CD8-positive, alpha-beta T cell (primary cell): ENCODE measurements at regions of chr4 and their contacts with region 1.

Region 1: DNA sequence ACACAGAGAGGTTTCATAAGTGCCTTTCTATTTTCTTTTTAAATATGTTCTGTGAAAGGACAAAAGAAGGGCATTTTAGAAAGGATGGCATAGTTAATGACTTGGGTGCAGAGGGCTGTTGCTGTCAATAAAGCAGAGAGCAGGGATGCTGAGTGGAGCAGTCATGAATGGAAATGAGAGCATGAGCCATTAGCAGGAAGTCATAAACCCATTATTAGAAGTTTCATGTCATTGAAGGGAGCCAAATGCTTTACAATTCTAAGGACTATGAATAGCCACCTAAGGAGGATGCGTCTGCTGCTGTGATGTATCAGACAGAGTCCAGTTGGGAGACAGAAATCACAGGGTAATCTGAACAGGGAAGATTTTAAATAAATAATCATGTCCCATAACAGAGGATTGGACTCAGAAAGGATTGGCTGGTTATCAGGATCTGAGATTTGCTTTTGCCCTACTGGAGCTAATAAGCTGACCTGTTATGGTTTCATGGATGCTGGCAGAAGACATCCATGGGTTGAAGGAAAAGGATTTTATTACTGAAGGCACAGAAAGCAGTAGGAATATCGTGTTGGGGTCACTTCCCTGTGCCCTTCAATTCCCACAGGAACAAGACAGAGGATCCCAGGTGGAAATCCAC is 47.5 kb upstream of the WDR19 start:
- DNase-seq: no peak
- ATAC-seq: no peak
- H3K4me3 ChIP-seq: no peak overlapping the region
- H3K4me3 Mint-ChIP-seq: no peak overlapping the region
- H3K27ac ChIP-seq: no peak overlapping the region
- H3K27ac Mint-ChIP-seq: no peak overlapping the region
- H3K4me1 ChIP-seq: peaks cover 3% of the 10 kb centered on the region
- H3K4me1 Mint-ChIP-seq: peaks cover 4% of the 10 kb centered on the region
- H3K27me3 ChIP-seq: no peaks in the 10 kb centered on the region
- H3K27me3 Mint-ChIP-seq: no peaks in the 10 kb centered on the region
- CTCF ChIP-seq: no peak

Region 2: GRCh38 chr4:37882665-37883296 is 1252.0 kb before region 1 on chr4:
- CTCF ChIA-PET with region 1: no interaction called
- POLR2A ChIA-PET with region 1: no interaction called
- intact Hi-C with region 1: no loop called
- DNase-seq: no peak
- ATAC-seq: no peak
- H3K4me3 ChIP-seq: no peak overlapping the region
- H3K4me3 Mint-ChIP-seq: no peak overlapping the region
- H3K27ac ChIP-seq: no peak overlapping the region
- H3K27ac Mint-ChIP-seq: no peak overlapping the region
- H3K4me1 ChIP-seq: no peaks in the 10 kb centered on the region
- H3K4me1 Mint-ChIP-seq: no peaks in the 10 kb centered on the region
- H3K27me3 ChIP-seq: no peaks in the 10 kb centered on the region
- H3K27me3 Mint-ChIP-seq: no peaks in the 10 kb centered on the region
- CTCF ChIP-seq: no peak

Region 3: GRCh38 chr4:38842994-38843393 is 291.8 kb before region 1 on chr4:
- CTCF ChIA-PET with region 1: no interaction called
- POLR2A ChIA-PET with region 1: no interaction called
- intact Hi-C with region 1: no loop called
- DNase-seq: no peak
- ATAC-seq: no peak
- H3K4me3 ChIP-seq: no peak overlapping the region
- H3K4me3 Mint-ChIP-seq: no peak overlapping the region
- H3K27ac ChIP-seq: no peak overlapping the region
- H3K27ac Mint-ChIP-seq: no peak overlapping the region
- H3K4me1 ChIP-seq: peaks cover 7% of the 10 kb centered on the region
- H3K4me1 Mint-ChIP-seq: peaks cover 7% of the 10 kb centered on the region
- H3K27me3 ChIP-seq: no peaks in the 10 kb centered on the region
- H3K27me3 Mint-ChIP-seq: no peaks in the 10 kb centered on the region
- CTCF ChIP-seq: no peak

Region 4: GRCh38 chr4:38889143-38889542 is 245.7 kb before region 1 on chr4:
- CTCF ChIA-PET with region 1: interaction called, 14 read pairs
- POLR2A ChIA-PET with region 1: no interaction called
- intact Hi-C with region 1: no loop called
- DNase-seq: peak in 1 of 9 experiments; percentile 10
- ATAC-seq: no peak
- H3K4me3 ChIP-seq: no peak overlapping the region
- H3K4me3 Mint-ChIP-seq: no peak overlapping the region
- H3K27ac ChIP-seq: no peak overlapping the region
- H3K27ac Mint-ChIP-seq: no peak overlapping the region
- H3K4me1 ChIP-seq: no peaks in the 10 kb centered on the region
- H3K4me1 Mint-ChIP-seq: peaks cover 6% of the 10 kb centered on the region
- H3K27me3 ChIP-seq: no peaks in the 10 kb centered on the region
- H3K27me3 Mint-ChIP-seq: no peaks in the 10 kb centered on the region
- CTCF ChIP-seq: no peak

Region 5: GRCh38 chr4:38896940-38897339 is 237.9 kb before region 1 on chr4:
- CTCF ChIA-PET with region 1: interaction called, 180 read pairs
- POLR2A ChIA-PET with region 1: interaction called, 3 read pairs
- intact Hi-C with region 1: loop called (anchors 1 kb)
- DNase-seq: no peak
- ATAC-seq: no peak
- H3K4me3 ChIP-seq: no peak overlapping the region
- H3K4me3 Mint-ChIP-seq: no peak overlapping the region
- H3K27ac ChIP-seq: no peak overlapping the region
- H3K27ac Mint-ChIP-seq: no peak overlapping the region
- H3K4me1 ChIP-seq: no peaks in the 10 kb centered on the region
- H3K4me1 Mint-ChIP-seq: no peaks in the 10 kb centered on the region
- H3K27me3 ChIP-seq: no peaks in the 10 kb centered on the region
- H3K27me3 Mint-ChIP-seq: peaks cover 6% of the 10 kb centered on the region
- CTCF ChIP-seq: no peak

Region 6: DNA sequence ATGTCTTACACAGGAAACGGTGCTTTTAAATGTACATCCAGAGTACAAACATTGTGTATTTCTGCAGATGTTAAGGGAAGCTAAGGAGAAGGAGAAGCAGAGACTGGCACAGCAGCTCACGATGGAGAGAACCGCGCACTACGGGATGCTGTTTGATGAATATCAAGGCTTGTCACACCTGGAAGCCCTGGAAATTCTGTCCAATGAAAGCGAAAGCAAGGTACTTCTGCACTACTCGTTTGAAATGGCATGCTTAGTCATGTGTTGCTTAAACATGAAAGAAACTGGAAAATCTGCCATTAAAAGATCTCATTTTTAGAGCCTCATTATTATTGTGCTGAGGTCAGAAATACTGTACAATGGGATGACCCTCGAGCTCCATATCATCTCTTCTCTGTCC is 219.9 kb before region 1 on chr4:
- CTCF ChIA-PET with region 1: interaction called, 10 read pairs
- POLR2A ChIA-PET with region 1: no interaction called
- intact Hi-C with region 1: no loop called
- DNase-seq: peak in 1 of 9 experiments; percentile 7
- ATAC-seq: no peak
- H3K4me3 ChIP-seq: no peak overlapping the region
- H3K4me3 Mint-ChIP-seq: peak overlapping the region; percentile 49
- H3K27ac ChIP-seq: no peak overlapping the region
- H3K27ac Mint-ChIP-seq: no peak overlapping the region
- H3K4me1 ChIP-seq: no peaks in the 10 kb centered on the region
- H3K4me1 Mint-ChIP-seq: peaks cover 9% of the 10 kb centered on the region
- H3K27me3 ChIP-seq: no peaks in the 10 kb centered on the region
- H3K27me3 Mint-ChIP-seq: no peaks in the 10 kb centered on the region
- CTCF ChIP-seq: no peak

Region 7: GRCh38 chr4:38993694-38994093 is 141.1 kb before region 1 on chr4:
- CTCF ChIA-PET with region 1: no interaction called
- POLR2A ChIA-PET with region 1: no interaction called
- intact Hi-C with region 1: loop called in 1 of 2 experiments (anchors 10 kb)
- DNase-seq: no peak
- ATAC-seq: no peak
- H3K4me3 ChIP-seq: no peak overlapping the region
- H3K4me3 Mint-ChIP-seq: no peak overlapping the region
- H3K27ac ChIP-seq: no peak overlapping the region
- H3K27ac Mint-ChIP-seq: no peak overlapping the region
- H3K4me1 ChIP-seq: no peaks in the 10 kb centered on the region
- H3K4me1 Mint-ChIP-seq: no peaks in the 10 kb centered on the region
- H3K27me3 ChIP-seq: no peaks in the 10 kb centered on the region
- H3K27me3 Mint-ChIP-seq: no peaks in the 10 kb centered on the region
- CTCF ChIP-seq: no peak